Heart right ventricle (tissue), 16 donors: ENCODE measurements at regions of chr6 and their contacts with region 1.

Region 1: GRCh38 chr6:80366714-80367113 is 260.2 kb downstream of the BCKDHB start:
- DNase-seq: peak; percentile 69 to 72
- ATAC-seq: peak; percentile 34 to 96 (median 89)
- H3K4me3 ChIP-seq: no peak overlapping the region
- H3K27ac ChIP-seq: no peak overlapping the region
- H3K4me1 ChIP-seq: peaks cover 0 to 16% (median 7%) of the 10 kb centered on the region in 9 donors
- H3K27me3 ChIP-seq: no peaks in the 10 kb centered on the region
- CTCF ChIP-seq: no peak

Region 2: GRCh38 chr6:80335121-80335531 is 31.6 kb before region 1 on chr6:
- intact Hi-C with region 1: no loop called
- DNase-seq: no peak
- ATAC-seq: no peak
- H3K4me3 ChIP-seq: peak overlapping the region in 6 of 10 donors; percentile 18 to 36 (median 26)
- H3K27ac ChIP-seq: peak overlapping the region in 2 of 10 donors; percentile 23 to 32
- H3K4me1 ChIP-seq: peaks cover 0 to 6% (median 0%) of the 10 kb centered on the region in 9 donors
- H3K27me3 ChIP-seq: no peaks in the 10 kb centered on the region
- CTCF ChIP-seq: no peak

Region 3: DNA sequence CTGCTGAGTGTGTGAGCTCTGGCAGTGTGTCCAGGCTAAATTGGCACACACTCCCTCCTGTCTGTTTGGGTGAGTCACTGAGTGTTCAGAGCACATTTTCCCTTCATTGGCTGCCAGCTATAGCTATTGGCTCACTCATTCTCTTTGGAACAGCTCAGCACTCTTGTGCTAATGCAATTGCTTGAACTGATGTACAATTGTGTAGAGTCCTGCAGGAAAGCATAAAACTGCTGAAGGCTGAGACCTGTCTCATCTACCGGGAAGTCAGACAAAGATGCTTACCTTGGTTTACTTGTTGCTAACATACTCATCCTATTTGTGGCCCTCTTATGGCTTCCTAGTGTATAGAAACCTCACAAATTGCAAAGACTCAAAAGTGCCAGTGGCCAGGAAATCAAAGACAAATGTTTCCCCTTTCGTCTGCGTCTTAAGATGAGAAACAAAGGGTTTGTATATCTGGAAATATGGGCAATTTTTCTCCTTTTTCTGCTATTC is 90.8 kb after region 1 on chr6:
- intact Hi-C with region 1: loop called in 1 of 10 experiments (anchors 10 kb)
- DNase-seq: peak; percentile 44 to 66
- ATAC-seq: peak; percentile 92 to 100 (median 98)
- H3K4me3 ChIP-seq: no peak overlapping the region
- H3K27ac ChIP-seq: no peak overlapping the region
- H3K4me1 ChIP-seq: peaks cover 0 to 26% (median 14%) of the 10 kb centered on the region in 9 donors
- H3K27me3 ChIP-seq: no peaks in the 10 kb centered on the region
- CTCF ChIP-seq: no peak